HAP-1 (cell line): ENCODE measurements at regions of chr10 and their contacts with region 1.

Region 1: GRCh38 chr10:86585037-86585725 is 63.6 kb upstream of the WAPL start:
- DNase-seq: peak; percentile 52 to 82
- H3K4me3 ChIP-seq: no peak overlapping the region
- H3K4me1 ChIP-seq: no peaks in the 10 kb centered on the region
- H3K27me3 ChIP-seq: no peaks in the 10 kb centered on the region

Region 2: DNA sequence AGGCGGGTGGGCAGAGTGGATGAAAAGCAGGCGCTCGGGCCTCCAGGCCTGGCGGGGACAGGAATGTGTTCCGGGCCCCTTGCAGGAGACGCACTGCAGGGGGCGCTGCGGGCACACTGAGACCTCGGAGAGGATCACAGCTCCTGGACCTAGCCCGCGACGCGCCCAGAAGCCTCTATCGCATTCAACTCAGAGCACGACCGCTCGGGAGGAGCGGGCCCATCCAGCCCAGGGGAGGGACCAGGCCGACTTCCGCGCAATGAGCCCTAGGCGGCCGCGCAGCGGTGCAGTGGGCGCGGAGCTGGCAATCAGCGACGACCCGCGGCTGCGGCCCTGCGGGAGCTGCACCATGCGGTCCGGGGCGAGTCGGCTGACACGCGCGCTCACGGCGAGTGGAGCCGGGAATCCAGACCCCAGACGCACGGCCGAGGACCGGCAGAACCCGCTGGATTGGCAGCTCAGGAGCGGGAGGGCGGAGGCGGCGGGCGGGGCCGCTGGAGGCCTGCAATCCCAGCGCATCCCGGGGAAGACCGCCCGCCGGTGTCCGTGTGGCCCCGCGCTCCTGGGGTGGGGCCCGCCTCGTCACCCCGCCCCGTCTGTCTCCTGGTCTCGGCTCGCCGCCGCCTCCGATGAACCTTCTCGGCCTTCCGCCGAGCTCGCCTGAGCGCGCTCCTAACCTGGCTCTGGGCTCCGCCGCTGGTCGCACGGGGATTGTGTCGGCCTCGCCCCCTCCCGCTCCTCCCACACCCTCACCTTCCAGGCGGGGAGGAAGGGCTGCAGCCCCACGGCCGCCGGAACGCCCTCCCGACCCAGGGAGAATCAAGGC is 185.1 kb before region 1 on chr10:
- in situ Hi-C with region 1: loop called (anchors 5 kb)
- DNase-seq: peak; percentile 93 to 98
- H3K4me3 ChIP-seq: peak overlapping the region; percentile 46
- H3K4me1 ChIP-seq: no peaks in the 10 kb centered on the region; the same call in 1 of the 2 replicates
- H3K27me3 ChIP-seq: no peaks in the 10 kb centered on the region